ENCODE measurements at regions of chr12 and their contacts with region 1.

Region 1: GRCh38 chr12:53118751-53119300 is 15.5 kb downstream of the SOAT2 start:
- DNase-seq: no peak
- H3K4me3 ChIP-seq: no peak overlapping the region
- H3K4me3 Mint-ChIP-seq: no peak overlapping the region
- H3K27ac ChIP-seq: no peak overlapping the region
- H3K27ac Mint-ChIP-seq: peak overlapping the region in 2 of 8 donors; percentile 57 to 68
- H3K4me1 ChIP-seq: no peaks in the 10 kb centered on the region
- H3K4me1 Mint-ChIP-seq: no peaks in the 10 kb centered on the region
- H3K27me3 ChIP-seq: no peaks in the 10 kb centered on the region
- H3K27me3 Mint-ChIP-seq: no peaks in the 10 kb centered on the region

Region 2: GRCh38 chr12:53093777-53094393 is 24.9 kb before region 1 on chr12:
- CTCF ChIA-PET with region 1: interaction called, 3 read pairs
- POLR2A ChIA-PET with region 1: interaction called, 17 read pairs
- DNase-seq: no peak
- H3K4me3 ChIP-seq: no peak overlapping the region
- H3K4me3 Mint-ChIP-seq: peak overlapping the region in 1 of 7 donors; percentile 55
- H3K27ac ChIP-seq: no peak overlapping the region
- H3K27ac Mint-ChIP-seq: peak overlapping the region in 3 of 8 donors; percentile 38 to 75 (median 70)
- H3K4me1 ChIP-seq: peaks cover 19% of the 10 kb centered on the region
- H3K4me1 Mint-ChIP-seq: peaks cover 11 to 27% (median 15%) of the 10 kb centered on the region in 3 donors
- H3K27me3 ChIP-seq: no peaks in the 10 kb centered on the region
- H3K27me3 Mint-ChIP-seq: peaks cover 3% of the 10 kb centered on the region in 2 donors

Region 3: GRCh38 chr12:53133722-53134121 is 14.9 kb after region 1 on chr12:
- CTCF ChIA-PET with region 1: no interaction called
- POLR2A ChIA-PET with region 1: no interaction called
- DNase-seq: no peak
- H3K4me3 ChIP-seq: no peak overlapping the region
- H3K4me3 Mint-ChIP-seq: no peak overlapping the region
- H3K27ac ChIP-seq: no peak overlapping the region
- H3K27ac Mint-ChIP-seq: no peak overlapping the region
- H3K4me1 ChIP-seq: no peaks in the 10 kb centered on the region
- H3K4me1 Mint-ChIP-seq: no peaks in the 10 kb centered on the region
- H3K27me3 ChIP-seq: no peaks in the 10 kb centered on the region
- H3K27me3 Mint-ChIP-seq: peaks cover 10 to 14% of the 10 kb centered on the region in 2 donors

Region 4: GRCh38 chr12:53267999-53268647 is 149.3 kb after region 1 on chr12 and contains the start of gene ESPL1:
- CTCF ChIA-PET with region 1: no interaction called
- POLR2A ChIA-PET with region 1: no interaction called
- DNase-seq: peak; percentile 75 to 88 (median 84)
- H3K4me3 ChIP-seq: peak within 1 kb of the TSS; percentile 83
- H3K4me3 Mint-ChIP-seq: peak within 1 kb of the TSS; percentile 88 to 99 (median 94)
- H3K27ac ChIP-seq: peak within 1 kb of the TSS; percentile 67
- H3K27ac Mint-ChIP-seq: peak within 1 kb of the TSS; percentile 52 to 99 (median 90)
- H3K4me1 ChIP-seq: peaks cover 13% of the 10 kb centered on the region
- H3K4me1 Mint-ChIP-seq: peaks cover 16 to 21% (median 20%) of the 10 kb centered on the region in 3 donors
- H3K27me3 ChIP-seq: no peaks in the 10 kb centered on the region
- H3K27me3 Mint-ChIP-seq: no peaks in the 10 kb centered on the region
- total RNA-seq, gene ESPL1: 58.4 to 63.4 TPM

Measured in CD8-positive, alpha-beta memory T cell (primary cell).